Activated CD8-positive, alpha-beta T cell treated with anti-CD3 and anti-CD28 coated beads, Interleukin-2, amount 10 ng/mL, durations not matched to agents 7 days and 5 days (primary cell): ENCODE measurements at regions of chr10 and their contacts with region 1.

Region 1: GRCh38 chr10:114304017-114304570 is 65.0 kb downstream of the VWA2 start:
- DNase-seq: peak; percentile 85
- ATAC-seq: peak; percentile 59
- H3K4me3 Mint-ChIP-seq: peak overlapping the region; percentile 87
- H3K27ac Mint-ChIP-seq: peak overlapping the region; percentile 69
- H3K4me1 Mint-ChIP-seq: peaks cover 13% of the 10 kb centered on the region
- H3K27me3 Mint-ChIP-seq: no peaks in the 10 kb centered on the region

Region 2: GRCh38 chr10:113922787-113923570 is 381.1 kb before region 1 on chr10:
- CTCF ChIA-PET with region 1: no interaction called
- POLR2A ChIA-PET with region 1: no interaction called
- DNase-seq: no peak
- ATAC-seq: no peak
- H3K4me3 Mint-ChIP-seq: no peak overlapping the region
- H3K27ac Mint-ChIP-seq: no peak overlapping the region
- H3K4me1 Mint-ChIP-seq: no peaks in the 10 kb centered on the region
- H3K27me3 Mint-ChIP-seq: peaks cover 23% of the 10 kb centered on the region

Region 3: GRCh38 chr10:114142018-114142417 is 162.1 kb before region 1 on chr10:
- CTCF ChIA-PET with region 1: no interaction called
- POLR2A ChIA-PET with region 1: no interaction called
- DNase-seq: no peak
- ATAC-seq: no peak
- H3K4me3 Mint-ChIP-seq: no peak overlapping the region
- H3K27ac Mint-ChIP-seq: no peak overlapping the region
- H3K4me1 Mint-ChIP-seq: no peaks in the 10 kb centered on the region
- H3K27me3 Mint-ChIP-seq: no peaks in the 10 kb centered on the region

Region 4: GRCh38 chr10:114388275-114388674 is 84.2 kb after region 1 on chr10:
- CTCF ChIA-PET with region 1: interaction called, 26 read pairs
- POLR2A ChIA-PET with region 1: no interaction called
- DNase-seq: peak; percentile 31
- ATAC-seq: peak; percentile 33
- H3K4me3 Mint-ChIP-seq: no peak overlapping the region
- H3K27ac Mint-ChIP-seq: peak overlapping the region; percentile 9
- H3K4me1 Mint-ChIP-seq: peaks cover 15% of the 10 kb centered on the region
- H3K27me3 Mint-ChIP-seq: no peaks in the 10 kb centered on the region

Region 5: DNA sequence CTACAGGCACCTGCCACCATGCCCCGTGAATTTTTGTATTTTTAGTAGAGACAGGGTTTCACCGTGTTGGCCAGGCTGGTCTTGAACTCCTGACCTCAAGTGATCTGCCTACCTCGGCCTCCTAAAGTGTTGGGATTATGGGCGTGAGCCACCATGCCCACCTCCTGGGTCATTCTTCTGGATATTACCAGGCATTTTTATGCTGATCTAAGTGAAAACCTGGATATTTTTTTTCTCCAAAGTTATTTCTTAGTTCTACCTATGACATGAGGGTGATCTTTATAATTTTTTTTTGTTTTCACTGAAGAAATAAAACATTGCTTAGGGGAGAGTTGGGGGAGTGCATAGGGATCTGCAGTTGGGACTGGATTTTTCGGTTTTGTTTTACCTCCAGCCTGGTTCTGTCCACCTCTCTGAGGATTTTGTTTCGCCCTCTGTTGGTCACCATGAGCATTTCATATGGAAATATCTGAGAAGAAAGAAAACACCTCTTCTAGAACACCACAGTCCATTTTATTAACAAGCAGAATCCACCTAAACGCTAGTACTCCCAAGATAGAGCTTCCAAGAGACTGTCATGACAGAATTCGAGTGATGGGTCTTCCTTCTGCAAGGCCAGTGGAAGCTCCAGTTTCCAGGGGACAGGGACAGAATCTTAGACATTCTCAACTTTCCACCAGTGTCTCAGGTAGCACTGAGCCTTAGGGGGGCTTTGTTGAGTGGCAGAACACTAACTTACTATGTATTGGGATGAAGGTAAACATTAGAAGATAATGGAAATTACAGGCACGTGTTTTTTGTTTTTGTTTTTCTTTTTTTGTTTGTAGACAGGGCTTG is 133.6 kb after region 1 on chr10:
- CTCF ChIA-PET with region 1: interaction called, 44 read pairs
- POLR2A ChIA-PET with region 1: interaction called, 3 read pairs
- DNase-seq: no peak
- ATAC-seq: no peak
- H3K4me3 Mint-ChIP-seq: no peak overlapping the region
- H3K27ac Mint-ChIP-seq: no peak overlapping the region
- H3K4me1 Mint-ChIP-seq: no peaks in the 10 kb centered on the region
- H3K27me3 Mint-ChIP-seq: no peaks in the 10 kb centered on the region

Region 6: GRCh38 chr10:114486938-114487814 is 183.1 kb after region 1 on chr10:
- CTCF ChIA-PET with region 1: interaction called, 11 read pairs
- POLR2A ChIA-PET with region 1: no interaction called
- DNase-seq: no peak
- ATAC-seq: no peak
- H3K4me3 Mint-ChIP-seq: no peak overlapping the region
- H3K27ac Mint-ChIP-seq: no peak overlapping the region
- H3K4me1 Mint-ChIP-seq: peaks cover 28% of the 10 kb centered on the region
- H3K27me3 Mint-ChIP-seq: no peaks in the 10 kb centered on the region

Region 7: DNA sequence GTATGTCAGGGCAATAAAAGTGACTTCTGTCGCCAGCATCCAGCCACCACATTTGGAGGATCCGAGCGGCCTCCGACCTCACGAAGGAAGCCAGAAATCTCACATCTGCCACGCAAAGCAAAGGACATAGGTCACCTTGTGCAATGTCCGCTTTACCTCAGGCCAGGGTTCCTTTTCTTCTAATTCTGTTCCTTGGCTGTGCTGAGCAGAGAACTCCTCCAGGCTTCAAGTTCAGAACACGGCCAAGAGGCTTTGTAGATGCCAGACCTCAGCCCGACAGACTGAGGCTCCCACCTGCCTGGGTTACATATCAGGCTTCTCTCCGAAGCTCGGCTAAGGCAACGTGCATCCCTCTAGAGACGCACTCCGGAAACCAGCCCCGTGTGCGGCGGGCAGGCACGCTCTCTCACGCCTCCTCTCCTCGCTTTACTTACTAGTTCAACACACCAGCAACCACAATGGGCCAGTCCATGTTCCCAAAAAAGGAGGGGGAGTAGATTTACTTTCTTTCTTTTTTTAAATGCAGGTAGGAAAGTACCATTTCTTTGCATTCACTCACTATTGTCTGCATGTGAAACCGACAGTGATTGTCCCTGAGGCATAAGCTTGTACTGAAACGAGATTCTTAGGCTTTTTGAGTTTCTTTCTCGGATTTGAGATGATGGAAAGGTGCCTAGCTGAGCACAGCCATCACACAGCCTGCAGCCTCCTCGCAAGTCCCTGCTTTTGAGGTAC is 222.6 kb after region 1 on chr10:
- CTCF ChIA-PET with region 1: interaction called, 19 read pairs
- POLR2A ChIA-PET with region 1: interaction called, 8 read pairs
- DNase-seq: peak; percentile 96
- ATAC-seq: peak; percentile 96
- H3K4me3 Mint-ChIP-seq: peak overlapping the region; percentile 84
- H3K27ac Mint-ChIP-seq: peak overlapping the region; percentile 94
- H3K4me1 Mint-ChIP-seq: peaks cover 68% of the 10 kb centered on the region
- H3K27me3 Mint-ChIP-seq: no peaks in the 10 kb centered on the region

Region 8: DNA sequence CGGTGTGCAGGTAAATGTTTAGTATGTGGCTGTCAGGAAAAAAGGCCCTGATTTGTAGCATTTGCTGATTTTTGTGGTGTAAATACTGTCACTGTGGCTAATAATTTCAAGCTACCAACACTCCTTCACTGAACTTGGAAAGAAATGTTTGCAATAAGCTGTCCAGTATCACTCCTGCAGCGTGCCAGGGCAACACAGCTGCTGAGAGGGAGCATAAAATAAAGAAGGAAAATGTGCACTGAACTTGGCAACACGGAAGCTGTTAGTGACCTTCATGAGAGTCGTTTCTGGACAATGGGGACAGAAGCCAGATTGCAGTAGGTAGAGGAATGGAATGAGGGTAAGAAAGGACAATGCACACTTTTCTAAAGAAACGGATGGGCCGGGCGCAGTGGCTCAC is 479.6 kb after region 1 on chr10:
- CTCF ChIA-PET with region 1: interaction called, 23 read pairs
- POLR2A ChIA-PET with region 1: no interaction called
- DNase-seq: no peak
- ATAC-seq: no peak
- H3K4me3 Mint-ChIP-seq: no peak overlapping the region
- H3K27ac Mint-ChIP-seq: no peak overlapping the region
- H3K4me1 Mint-ChIP-seq: peaks cover 10% of the 10 kb centered on the region
- H3K27me3 Mint-ChIP-seq: peaks cover 11% of the 10 kb centered on the region